Pancreas (tissue), 10 donors: ENCODE measurements at regions of chr20 and their contacts with region 1.

Region 1: GRCh38 chr20:24917797-24918578 is 31.1 kb upstream of the CST7 start:
- DNase-seq: peak; percentile 66 to 91 (median 76)
- ATAC-seq: peak; percentile 97 to 99 (median 99)
- H3K4me3 ChIP-seq: no peak overlapping the region
- H3K27ac ChIP-seq: no peak overlapping the region
- H3K4me1 ChIP-seq: peaks cover 5 to 8% (median 7%) of the 10 kb centered on the region in 3 donors
- H3K27me3 ChIP-seq: no peaks in the 10 kb centered on the region
- CTCF ChIP-seq: peak; percentile 79 to 91 (median 87)

Region 2: GRCh38 chr20:24149881-24150307 is 768.1 kb before region 1 on chr20:
- intact Hi-C with region 1: loop called in 1 of 3 experiments (anchors 10 kb)
- DNase-seq: peak in 4 of 6 donors; percentile 37 to 71 (median 54)
- ATAC-seq: peak; percentile 68 to 80 (median 76)
- H3K4me3 ChIP-seq: no peak overlapping the region
- H3K27ac ChIP-seq: no peak overlapping the region
- H3K4me1 ChIP-seq: no peaks in the 10 kb centered on the region
- H3K27me3 ChIP-seq: no peaks in the 10 kb centered on the region
- CTCF ChIP-seq: peak in 3 of 4 donors; percentile 16 to 28 (median 24)

Region 3: GRCh38 chr20:24160563-24161375 is 757.2 kb before region 1 on chr20:
- intact Hi-C with region 1: loop called in 2 of 3 experiments (anchors 10 kb)
- DNase-seq: peak in 4 of 6 donors; percentile 35 to 74 (median 64)
- ATAC-seq: peak; percentile 74 to 95 (median 91)
- H3K4me3 ChIP-seq: no peak overlapping the region
- H3K27ac ChIP-seq: no peak overlapping the region
- H3K4me1 ChIP-seq: no peaks in the 10 kb centered on the region
- H3K27me3 ChIP-seq: no peaks in the 10 kb centered on the region
- CTCF ChIP-seq: peak; percentile 62 to 75 (median 69)

Region 4: DNA sequence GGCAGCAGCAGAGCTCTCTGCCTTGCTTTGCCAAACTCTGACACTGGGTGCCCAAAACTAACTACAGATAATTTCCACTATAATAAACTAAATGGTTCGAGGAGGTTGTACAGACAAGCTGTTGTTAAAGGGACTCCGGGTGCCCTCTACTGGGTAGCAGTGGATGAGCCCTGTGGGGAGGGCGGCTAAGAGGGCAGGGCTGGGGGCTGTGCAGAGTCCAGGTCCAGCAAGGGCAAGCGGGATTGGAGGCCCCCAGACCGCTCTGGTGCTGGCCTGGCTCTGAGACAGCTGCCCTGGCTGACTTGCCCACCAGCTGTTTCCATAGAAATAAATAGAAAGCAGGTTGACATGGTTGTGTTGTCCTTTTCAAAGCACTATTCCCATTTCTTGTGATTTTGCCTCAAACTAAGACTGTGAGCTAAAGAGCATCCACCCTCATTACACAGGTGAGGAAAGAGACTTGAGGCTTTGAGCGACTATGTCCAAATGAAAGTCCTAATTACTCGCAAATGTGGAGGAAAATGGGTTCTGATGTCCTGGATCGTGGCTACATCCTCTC is 136.5 kb before region 1 on chr20:
- intact Hi-C with region 1: no loop called
- DNase-seq: peak in 2 of 6 donors; percentile 41 to 54
- ATAC-seq: peak in 3 of 4 donors; percentile 48 to 78 (median 61)
- H3K4me3 ChIP-seq: no peak overlapping the region
- H3K27ac ChIP-seq: no peak overlapping the region
- H3K4me1 ChIP-seq: no peaks in the 10 kb centered on the region
- H3K27me3 ChIP-seq: no peaks in the 10 kb centered on the region
- CTCF ChIP-seq: peak in 1 of 4 donors; percentile 14

Region 5: GRCh38 chr20:24981790-24982189 is 63.8 kb after region 1 on chr20:
- intact Hi-C with region 1: no loop called
- DNase-seq: no peak
- ATAC-seq: peak in 2 of 4 donors; percentile 63 to 83
- H3K4me3 ChIP-seq: no peak overlapping the region
- H3K27ac ChIP-seq: no peak overlapping the region
- H3K4me1 ChIP-seq: no peaks in the 10 kb centered on the region
- H3K27me3 ChIP-seq: no peaks in the 10 kb centered on the region
- CTCF ChIP-seq: no peak